Activated naive CD8-positive, alpha-beta T cell treated with anti-CD3 and anti-CD28 coated beads, Interleukin-2, amount 10 ng/mL, durations not matched to agents 7 days and 5 days (primary cell): ENCODE measurements at regions of chr14 and their contacts with region 1.

Region 1: DNA sequence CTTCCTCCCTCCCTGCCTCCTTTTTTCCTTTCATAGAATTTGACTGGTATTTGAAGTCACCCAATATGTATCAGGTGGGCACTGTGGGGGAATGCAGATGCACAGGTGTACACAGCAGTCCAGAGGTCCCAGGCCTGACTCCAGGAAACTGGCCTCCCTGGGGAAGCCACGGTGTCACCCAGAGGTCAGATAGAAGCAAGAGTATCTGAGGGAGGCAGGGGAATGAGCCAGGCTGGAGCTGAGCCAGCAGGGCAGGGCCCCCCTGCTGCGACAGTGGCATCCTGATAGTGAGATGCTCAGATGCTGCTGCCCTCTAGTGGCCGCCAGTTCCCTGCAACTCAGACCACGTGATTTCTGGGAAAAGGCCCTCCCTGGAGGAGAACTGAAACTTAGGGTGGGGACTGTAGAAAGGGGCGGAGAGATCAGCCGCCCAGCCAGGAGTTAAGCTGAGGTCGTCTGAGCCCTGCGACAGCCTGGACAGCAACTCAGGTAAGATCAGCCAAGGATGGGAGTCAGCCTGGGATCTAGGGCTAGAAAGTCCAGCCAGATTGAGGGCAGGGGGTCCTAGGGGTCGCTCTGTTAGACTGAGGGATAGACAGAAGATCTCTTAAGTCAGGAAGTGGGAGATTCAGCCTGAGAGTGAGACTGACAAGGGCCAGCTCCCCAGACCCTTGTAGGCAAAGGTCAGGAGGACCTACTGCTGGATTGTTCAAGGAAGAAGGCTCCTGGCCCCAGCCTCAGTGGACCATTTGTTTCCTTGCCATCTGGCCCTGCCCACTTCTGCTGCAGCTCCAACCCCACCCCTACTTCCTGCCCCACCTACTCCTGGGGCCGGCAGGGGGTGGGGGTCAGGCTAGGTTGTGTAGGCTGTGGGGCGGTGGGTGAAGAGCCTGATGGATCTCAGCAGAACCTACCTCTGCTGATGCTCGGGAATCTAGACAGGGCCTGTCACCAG is at the start of gene IRF9:
- DNase-seq: peak; percentile 98
- ATAC-seq: peak; percentile 87
- H3K4me3 Mint-ChIP-seq: peak within 1 kb of the TSS; percentile 97
- H3K27ac Mint-ChIP-seq: peak within 1 kb of the TSS; percentile 100
- H3K4me1 Mint-ChIP-seq: peaks cover 47% of the 10 kb centered on the region
- H3K27me3 Mint-ChIP-seq: no peaks in the 10 kb centered on the region
- total RNA-seq, gene IRF9: 234 to 252 TPM

Region 2: GRCh38 chr14:24080888-24081738 is 80.0 kb before region 1 on chr14:
- POLR2A ChIA-PET with region 1: interaction called, 21 read pairs
- DNase-seq: peak; percentile 86
- ATAC-seq: peak; percentile 93
- H3K4me3 Mint-ChIP-seq: peak overlapping the region; percentile 80
- H3K27ac Mint-ChIP-seq: peak overlapping the region; percentile 87
- H3K4me1 Mint-ChIP-seq: peaks cover 21% of the 10 kb centered on the region
- H3K27me3 Mint-ChIP-seq: no peaks in the 10 kb centered on the region

Region 3: DNA sequence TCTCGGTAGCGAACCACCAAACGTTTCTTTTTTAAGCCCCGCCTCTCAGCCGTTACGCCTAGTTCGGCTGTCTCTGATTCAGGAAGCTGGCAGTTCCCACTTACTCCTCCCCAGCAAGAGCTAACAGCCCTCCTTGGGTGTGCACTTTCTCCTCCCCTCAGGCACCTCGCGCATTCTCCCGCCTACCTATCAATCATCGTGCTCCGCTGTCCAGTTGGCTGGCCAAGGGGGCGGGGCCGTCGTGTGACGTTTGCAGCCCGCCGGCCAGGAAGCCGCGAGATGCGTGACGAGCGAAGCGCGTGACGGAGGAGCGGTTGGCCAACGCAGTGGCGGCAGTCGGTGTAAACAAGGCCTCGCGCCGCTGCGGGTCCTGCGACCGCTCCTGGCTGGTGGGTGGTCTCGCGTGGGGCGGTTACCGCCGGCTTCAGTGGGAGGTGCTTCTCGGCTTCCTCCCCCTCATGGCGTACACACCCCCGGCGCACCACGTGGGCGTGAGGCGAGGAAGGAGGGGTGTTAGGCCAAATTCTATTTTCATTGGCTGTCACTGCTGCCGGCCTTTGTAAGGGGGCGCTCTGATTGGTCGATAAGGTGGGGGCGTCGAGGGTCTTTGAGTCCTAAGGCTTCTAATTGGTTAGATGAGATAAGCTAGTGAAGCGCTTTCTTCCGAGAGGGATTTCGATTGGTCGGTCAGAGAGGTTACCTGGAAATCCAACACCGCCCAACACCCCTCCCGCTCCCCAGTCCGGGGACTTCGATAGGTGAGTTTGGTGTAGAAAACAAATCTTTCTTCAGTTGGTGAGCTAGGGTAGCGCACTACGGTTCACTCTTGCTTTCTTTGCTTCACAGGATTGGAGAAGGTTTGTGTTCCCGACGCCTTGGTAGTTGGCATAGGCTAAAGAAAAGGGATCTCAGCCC is 46.3 kb before region 1 on chr14 and contains the starts of genes DCAF11 and NRL:
- POLR2A ChIA-PET with region 1: interaction called, 121 read pairs
- DNase-seq: peak; percentile 99
- ATAC-seq: peak; percentile 89
- H3K4me3 Mint-ChIP-seq: peak within 1 kb of the TSS; percentile 99
- H3K27ac Mint-ChIP-seq: peak within 1 kb of the TSS; percentile 99
- H3K4me1 Mint-ChIP-seq: peaks cover 24% of the 10 kb centered on the region
- H3K27me3 Mint-ChIP-seq: no peaks in the 10 kb centered on the region
- total RNA-seq, gene DCAF11: 100 to 105 TPM
- total RNA-seq, gene NRL: 3.3 to 3.4 TPM

Region 4: GRCh38 chr14:24146978-24147760 is 14.0 kb before region 1 on chr14 and contains the start of gene RNF31:
- POLR2A ChIA-PET with region 1: interaction called, 347 read pairs
- DNase-seq: peak; percentile 95
- ATAC-seq: peak; percentile 82
- H3K4me3 Mint-ChIP-seq: peak within 1 kb of the TSS; percentile 94
- H3K27ac Mint-ChIP-seq: peak within 1 kb of the TSS; percentile 96
- H3K4me1 Mint-ChIP-seq: peaks cover 54% of the 10 kb centered on the region
- H3K27me3 Mint-ChIP-seq: no peaks in the 10 kb centered on the region
- total RNA-seq, gene RNF31: 131 to 153 TPM

Region 5: GRCh38 chr14:24188251-24189058 is 27.3 kb after region 1 on chr14 and contains the start of gene IPO4:
- POLR2A ChIA-PET with region 1: interaction called, 49 read pairs
- DNase-seq: peak; percentile 87
- ATAC-seq: peak; percentile 85
- H3K4me3 Mint-ChIP-seq: peak within 1 kb of the TSS; percentile 85
- H3K27ac Mint-ChIP-seq: peak within 1 kb of the TSS; percentile 69
- H3K4me1 Mint-ChIP-seq: peaks cover 28% of the 10 kb centered on the region
- H3K27me3 Mint-ChIP-seq: no peaks in the 10 kb centered on the region
- total RNA-seq, gene IPO4: 32.2 to 33.0 TPM

Region 6: GRCh38 chr14:24241829-24242443 is 80.8 kb after region 1 on chr14:
- POLR2A ChIA-PET with region 1: interaction called, 14 read pairs
- DNase-seq: peak; percentile 95
- ATAC-seq: peak; percentile 82
- H3K4me3 Mint-ChIP-seq: peak overlapping the region; percentile 85
- H3K27ac Mint-ChIP-seq: peak overlapping the region; percentile 99
- H3K4me1 Mint-ChIP-seq: peaks cover 42% of the 10 kb centered on the region
- H3K27me3 Mint-ChIP-seq: no peaks in the 10 kb centered on the region

Region 7: DNA sequence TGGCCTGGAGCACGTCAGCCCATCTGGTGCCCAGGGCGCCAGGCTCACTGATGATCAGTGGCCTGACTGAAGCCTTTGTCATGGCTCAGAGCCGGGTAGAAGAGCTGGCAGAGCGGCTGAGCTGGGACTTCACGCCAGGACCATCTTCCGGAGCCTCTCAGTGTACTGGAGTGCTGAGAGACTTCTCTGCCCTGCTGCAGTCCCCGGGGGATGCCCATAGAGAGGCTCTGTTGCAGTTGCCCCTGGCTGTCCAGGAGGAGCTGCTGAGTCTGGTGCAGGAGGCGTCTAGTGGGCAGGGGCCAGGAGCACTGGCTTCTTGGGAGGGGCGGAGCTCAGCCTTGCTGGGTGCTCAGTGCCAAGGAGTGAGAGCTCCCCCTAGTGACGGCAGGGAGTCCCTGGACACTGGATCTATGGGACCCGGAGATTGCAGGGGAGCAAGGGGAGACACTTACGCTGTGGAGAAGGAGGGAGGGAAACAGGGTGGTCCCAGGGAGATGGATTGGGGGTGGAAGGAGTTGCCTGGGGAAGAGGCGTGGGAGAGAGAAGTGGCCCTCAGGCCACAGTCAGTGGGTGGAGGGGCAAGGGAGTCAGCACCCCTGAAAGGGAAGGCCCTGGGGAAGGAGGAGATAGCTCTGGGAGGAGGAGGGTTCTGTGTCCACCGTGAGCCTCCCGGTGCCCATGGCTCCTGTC is 270.6 kb after region 1 on chr14:
- POLR2A ChIA-PET with region 1: interaction called, 15 read pairs
- DNase-seq: peak; percentile 85
- ATAC-seq: peak; percentile 61
- H3K4me3 Mint-ChIP-seq: peak overlapping the region; percentile 95
- H3K27ac Mint-ChIP-seq: peak overlapping the region; percentile 97
- H3K4me1 Mint-ChIP-seq: peaks cover 34% of the 10 kb centered on the region
- H3K27me3 Mint-ChIP-seq: no peaks in the 10 kb centered on the region